ENCODE measurements at regions of chr11 and their contacts with region 1.

Region 1: DNA sequence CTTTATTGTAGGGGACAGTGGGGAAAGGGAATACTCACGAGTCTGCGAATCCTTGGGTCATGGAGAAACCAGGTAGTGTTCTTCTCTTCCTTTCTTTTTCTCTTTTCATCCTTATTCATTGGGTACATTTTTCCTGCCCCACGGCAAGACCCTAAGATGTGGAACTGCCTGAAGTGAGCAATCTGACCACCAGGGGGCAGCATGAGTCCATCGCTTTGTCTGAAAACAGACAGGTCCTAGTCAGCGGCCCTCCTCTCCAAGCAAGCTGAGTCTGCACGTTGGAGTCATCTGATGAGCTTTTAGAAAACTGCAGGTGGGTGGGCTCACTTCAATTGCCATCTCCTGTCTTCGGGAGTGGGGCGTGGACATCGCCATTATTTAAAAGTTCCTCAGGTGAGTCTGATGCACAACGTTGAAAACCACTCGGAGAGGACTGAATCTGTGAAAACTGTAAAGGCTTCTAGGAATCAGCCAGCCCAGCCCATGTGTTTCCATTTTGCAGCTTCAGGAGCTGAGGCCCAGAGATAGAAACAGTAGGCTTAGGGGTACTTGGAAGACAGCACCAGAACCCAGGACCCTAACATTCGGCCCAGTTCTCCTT is 34.0 kb upstream of the FBXO3 start:
- DNase-seq: peak; percentile 89
- H3K4me3 Mint-ChIP-seq: no peak overlapping the region
- H3K27ac Mint-ChIP-seq: no peak overlapping the region
- H3K4me1 Mint-ChIP-seq: peaks cover 12% of the 10 kb centered on the region
- H3K27me3 Mint-ChIP-seq: peaks cover 39% of the 10 kb centered on the region
- CTCF ChIP-seq: peak; percentile 93

Region 2: DNA sequence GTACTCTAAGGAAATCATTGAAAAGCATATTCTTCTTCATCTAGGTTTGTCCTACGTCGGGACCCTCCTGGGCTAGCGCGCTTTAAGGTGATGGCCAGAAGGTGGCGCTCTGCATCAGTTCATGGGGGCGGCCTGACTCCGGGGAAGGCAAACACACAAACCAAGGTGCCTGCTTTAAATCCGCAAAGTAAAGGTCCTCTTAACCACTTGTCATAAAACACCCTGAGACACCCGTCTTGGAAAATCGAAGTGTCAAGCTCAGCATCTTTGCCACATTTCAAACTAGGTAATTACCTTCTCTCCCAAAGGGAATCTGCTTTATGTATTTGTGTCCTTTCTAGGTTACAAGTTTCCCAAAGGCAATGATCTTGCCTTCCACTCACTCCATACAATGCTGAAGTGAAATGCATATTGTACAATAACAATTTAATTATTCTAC is 49.6 kb after region 1 on chr11:
- CTCF ChIA-PET with region 1: no interaction called
- intact Hi-C with region 1: loop called (anchors 1 kb)
- DNase-seq: peak; percentile 78
- H3K4me3 Mint-ChIP-seq: no peak overlapping the region
- H3K27ac Mint-ChIP-seq: no peak overlapping the region
- H3K4me1 Mint-ChIP-seq: no peaks in the 10 kb centered on the region
- H3K27me3 Mint-ChIP-seq: peaks cover 88% of the 10 kb centered on the region
- CTCF ChIP-seq: peak; percentile 83

Measured in Calu3 (cell line).